Heart left ventricle (tissue), 16 donors: ENCODE measurements at regions of chr5 and their contacts with region 1.

Region 1: DNA sequence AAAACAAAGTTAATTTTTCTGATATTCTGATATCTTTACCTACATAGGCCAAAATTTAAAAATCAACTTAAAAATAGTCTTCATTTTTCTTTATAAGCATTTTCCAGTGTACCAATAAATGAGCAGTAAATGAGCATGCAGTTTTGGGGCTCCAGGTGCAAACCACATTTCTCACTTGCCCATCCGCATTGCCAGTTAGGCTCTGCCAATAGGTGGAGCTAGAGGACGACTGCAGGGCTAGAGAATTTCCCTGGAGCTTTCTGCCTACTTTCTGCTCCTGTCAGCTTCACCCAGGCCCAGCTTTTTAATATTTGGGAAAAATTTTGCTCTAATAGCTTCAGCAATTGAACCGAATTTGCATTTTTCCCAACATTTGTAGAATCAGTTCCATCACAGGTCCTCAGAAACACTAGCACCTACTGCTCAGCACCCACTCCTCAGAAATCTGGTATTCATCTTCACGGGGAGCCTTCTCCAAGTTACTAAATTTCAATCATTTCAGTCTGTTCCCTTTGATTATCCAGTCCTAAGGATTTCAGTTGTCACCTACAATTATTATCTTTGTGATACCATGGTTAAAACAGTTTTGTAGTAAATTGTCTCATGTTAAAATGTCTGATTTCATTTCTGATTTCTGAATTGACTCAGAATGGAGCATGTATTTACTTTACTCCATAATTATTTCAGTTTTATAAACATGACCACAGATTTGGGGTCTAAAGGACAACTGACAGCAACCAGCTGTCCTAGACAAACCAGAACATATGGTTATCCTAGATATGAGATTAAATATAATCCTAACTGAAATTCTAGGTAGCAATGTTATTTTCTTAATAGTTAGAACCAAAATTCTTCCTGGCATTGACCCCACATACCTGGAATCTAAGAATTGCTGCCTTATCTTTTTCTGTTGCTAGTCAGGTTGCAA is 104.6 kb upstream of the FAM174A start:
- DNase-seq: peak; percentile 25 to 37 (median 32)
- ATAC-seq: peak in 1 of 4 donors; percentile 50
- H3K4me3 ChIP-seq: no peak overlapping the region
- H3K27ac ChIP-seq: no peak overlapping the region
- H3K4me1 ChIP-seq: no peaks in the 10 kb centered on the region
- H3K27me3 ChIP-seq: no peaks in the 10 kb centered on the region
- CTCF ChIP-seq: peak; percentile 70 to 94 (median 84)
- POLR2A ChIP-seq: no peak

Region 2: GRCh38 chr5:100406640-100407039 is 23.9 kb before region 1 on chr5:
- intact Hi-C with region 1: no loop called
- DNase-seq: peak in 2 of 5 donors; percentile 8 to 26
- ATAC-seq: peak in 3 of 4 donors; percentile 50 to 75 (median 55)
- H3K4me3 ChIP-seq: no peak overlapping the region
- H3K27ac ChIP-seq: no peak overlapping the region
- H3K4me1 ChIP-seq: no peaks in the 10 kb centered on the region
- H3K27me3 ChIP-seq: no peaks in the 10 kb centered on the region
- CTCF ChIP-seq: no peak
- POLR2A ChIP-seq: no peak

Region 3: DNA sequence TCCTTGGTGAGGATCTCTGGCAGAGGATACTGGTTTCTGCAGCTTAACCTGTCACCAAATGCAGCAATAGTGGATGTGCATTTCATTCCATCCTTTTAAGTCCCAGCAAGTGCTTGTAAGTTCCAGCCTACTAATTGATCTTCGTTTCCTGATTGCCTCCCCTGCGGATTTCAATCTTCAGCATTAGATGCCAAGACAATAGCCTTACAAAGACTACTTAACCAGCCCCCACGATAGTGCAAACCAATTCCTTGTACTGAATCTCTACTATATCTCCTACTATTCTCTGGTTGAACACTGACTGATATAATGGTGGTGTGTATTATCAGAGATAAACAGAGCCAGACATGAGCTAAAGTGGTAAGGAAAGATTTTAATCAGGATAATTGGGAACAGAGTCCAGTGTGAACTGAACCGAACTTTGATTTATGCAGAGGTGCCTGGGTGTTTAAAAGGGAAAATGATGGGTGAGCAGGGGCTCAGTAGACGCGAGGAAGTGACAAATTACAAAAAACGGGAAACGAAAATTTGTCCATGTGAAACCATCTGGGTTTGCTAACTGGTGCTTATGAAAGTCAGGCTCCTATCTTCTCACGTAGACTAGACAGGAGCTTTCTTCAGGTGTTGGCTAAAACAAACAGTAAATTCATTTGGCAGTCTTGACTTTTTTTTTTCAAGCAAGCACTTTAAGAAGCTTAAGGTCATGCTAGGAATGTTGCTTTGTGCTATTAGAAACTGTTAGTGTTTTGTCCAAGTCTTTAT is 579.4 kb after region 1 on chr5:
- intact Hi-C with region 1: no loop called
- DNase-seq: no peak
- ATAC-seq: no peak
- H3K4me3 ChIP-seq: no peak overlapping the region
- H3K27ac ChIP-seq: no peak overlapping the region
- H3K4me1 ChIP-seq: no peaks in the 10 kb centered on the region
- H3K27me3 ChIP-seq: no peaks in the 10 kb centered on the region
- CTCF ChIP-seq: no peak
- POLR2A ChIP-seq: no peak

Region 4: GRCh38 chr5:101045689-101046088 is 615.2 kb after region 1 on chr5:
- intact Hi-C with region 1: loop called in 2 of 10 experiments (anchors 5 to 10 kb)
- DNase-seq: no peak
- ATAC-seq: no peak
- H3K4me3 ChIP-seq: no peak overlapping the region
- H3K27ac ChIP-seq: no peak overlapping the region
- H3K4me1 ChIP-seq: no peaks in the 10 kb centered on the region
- H3K27me3 ChIP-seq: no peaks in the 10 kb centered on the region
- CTCF ChIP-seq: peak in 10 of 12 donors; percentile 13 to 50 (median 32)
- POLR2A ChIP-seq: no peak

Region 5: GRCh38 chr5:101390151-101390908 is 959.8 kb after region 1 on chr5:
- intact Hi-C with region 1: loop called in 3 of 10 experiments (anchors 5 to 10 kb)
- DNase-seq: peak in 1 of 5 donors; percentile 6
- ATAC-seq: no peak
- H3K4me3 ChIP-seq: no peak overlapping the region
- H3K27ac ChIP-seq: no peak overlapping the region
- H3K4me1 ChIP-seq: no peaks in the 10 kb centered on the region
- H3K27me3 ChIP-seq: no peaks in the 10 kb centered on the region
- CTCF ChIP-seq: peak; percentile 37 to 70 (median 53)
- POLR2A ChIP-seq: no peak

Region 6: GRCh38 chr5:101678481-101679193 is 1248.1 kb after region 1 on chr5:
- intact Hi-C with region 1: loop called in 3 of 10 experiments (anchors 5 to 10 kb)
- DNase-seq: peak in 2 of 5 donors; percentile 13 to 34
- ATAC-seq: peak in 1 of 4 donors; percentile 59
- H3K4me3 ChIP-seq: no peak overlapping the region
- H3K27ac ChIP-seq: no peak overlapping the region
- H3K4me1 ChIP-seq: no peaks in the 10 kb centered on the region
- H3K27me3 ChIP-seq: peaks cover 0 to 4% (median 0%) of the 10 kb centered on the region in 9 donors
- CTCF ChIP-seq: peak; percentile 76 to 93 (median 80)
- POLR2A ChIP-seq: no peak